ENCODE measurements at regions of chr15 and their contacts with region 1.

Region 1: GRCh38 chr15:93087825-93088199 is 1.2 kb downstream of the RGMA start:
- DNase-seq: no peak

Region 2: DNA sequence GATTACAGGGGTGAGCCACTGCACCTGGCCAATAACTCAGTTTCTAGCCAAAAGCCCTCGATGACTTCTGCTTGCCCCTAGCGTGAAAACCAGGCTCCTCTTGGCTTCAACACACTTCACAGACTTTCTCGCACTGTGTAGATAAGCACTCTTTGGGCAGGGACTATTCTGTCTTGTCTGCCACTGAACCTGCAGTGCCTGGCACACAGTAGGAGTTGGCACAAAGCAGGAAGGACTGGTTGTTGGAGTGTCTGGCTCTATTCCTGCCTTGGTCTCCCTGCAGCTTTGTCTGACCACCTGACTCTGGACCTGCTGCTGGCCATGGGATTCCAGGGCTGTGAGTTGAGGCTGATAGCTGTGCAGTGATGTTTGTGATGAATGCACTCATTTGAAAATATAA is 47.6 kb after region 1 on chr15:
- intact Hi-C with region 1: no loop called
- DNase-seq: no peak

Region 3: GRCh38 chr15:93210995-93211394 is 123.2 kb after region 1 on chr15:
- intact Hi-C with region 1: loop called (anchors 5 kb)
- DNase-seq: no peak

Region 4: DNA sequence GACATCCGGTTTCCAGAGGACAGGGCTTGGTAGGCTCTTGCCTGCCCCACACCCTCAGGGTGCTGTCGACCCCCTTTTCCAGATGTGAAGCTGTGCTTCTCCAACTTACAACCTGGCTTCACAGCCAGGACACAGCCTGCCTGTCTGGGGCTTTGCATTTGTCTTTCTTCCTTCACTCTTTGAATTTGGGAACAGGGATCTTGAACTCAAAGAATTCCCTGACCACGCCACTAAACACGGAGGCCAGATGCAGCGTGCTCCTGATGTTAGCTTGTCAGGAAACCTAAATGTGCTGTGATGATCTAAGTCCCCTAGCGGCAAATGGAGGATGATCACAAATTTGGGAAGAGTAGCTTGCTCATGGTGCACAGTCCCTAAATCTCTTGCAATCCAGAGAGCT is 246.0 kb after region 1 on chr15:
- intact Hi-C with region 1: loop called (anchors 2 kb)
- DNase-seq: no peak

Measured in cardiac septum (tissue), 1 donor.